CD4-positive, alpha-beta memory T cell (primary cell): ENCODE measurements at regions of chr6 and their contacts with region 1.

Region 1: GRCh38 chr6:52995913-52996645 is 995 bp upstream of the GSTA4 start:
- DNase-seq: peak in 4 of 5 donors; percentile 36 to 42 (median 39)
- H3K4me3 ChIP-seq: peak overlapping the region; percentile 4 to 59
- H3K4me3 Mint-ChIP-seq: peak overlapping the region; percentile 92 to 99 (median 94)
- H3K27ac ChIP-seq: no peak overlapping the region
- H3K27ac Mint-ChIP-seq: peak overlapping the region; percentile 95 to 100 (median 100)
- H3K4me1 ChIP-seq: peaks cover 22% of the 10 kb centered on the region
- H3K4me1 Mint-ChIP-seq: peaks cover 9 to 29% (median 20%) of the 10 kb centered on the region in 4 donors
- H3K27me3 ChIP-seq: no peaks in the 10 kb centered on the region
- H3K27me3 Mint-ChIP-seq: peaks cover 4 to 8% of the 10 kb centered on the region in 2 donors

Region 2: DNA sequence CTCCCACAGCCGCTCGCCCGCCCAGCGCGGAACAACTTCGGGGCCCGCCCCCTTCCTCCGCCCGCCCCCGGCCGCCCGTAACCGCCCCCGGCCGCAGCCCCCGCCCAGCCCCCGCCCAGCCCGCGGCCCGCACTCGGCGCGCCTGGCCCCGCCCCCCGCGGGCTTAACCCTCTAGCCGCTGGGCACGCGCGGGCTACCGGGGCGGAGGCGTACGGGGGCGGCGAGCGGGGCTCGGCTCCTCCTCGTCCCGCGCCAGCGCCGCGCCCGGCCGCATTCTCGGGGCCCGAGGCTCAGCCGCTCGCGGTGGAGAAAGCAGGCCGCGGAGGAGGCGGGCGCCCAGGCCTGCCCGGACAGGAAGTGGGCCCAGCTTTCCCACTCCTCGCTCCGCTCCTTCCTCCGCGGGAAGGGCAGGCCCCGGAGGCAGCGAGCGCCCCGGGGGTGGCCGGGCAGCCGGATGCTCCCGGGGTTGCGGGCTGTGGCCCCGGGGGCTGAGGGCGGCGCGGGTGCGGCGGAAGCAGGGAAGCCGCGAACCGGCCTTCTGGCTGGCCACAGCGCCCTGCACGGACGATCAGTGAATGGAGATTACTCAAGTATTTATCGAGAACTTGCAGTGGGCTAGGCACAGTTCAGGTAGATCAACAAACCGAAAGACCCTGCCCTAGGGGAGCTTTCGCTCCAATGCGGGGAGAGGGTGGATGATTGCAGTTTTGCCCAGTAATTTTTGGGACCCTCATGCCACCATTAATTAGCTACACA is 418.9 kb before region 1 on chr6 and contains the start of gene TRAM2:
- CTCF ChIA-PET with region 1: no interaction called
- POLR2A ChIA-PET with region 1: no interaction called
- intact Hi-C with region 1: loop called (anchors 10 kb)
- DNase-seq: peak; percentile 73 to 83 (median 79)
- H3K4me3 ChIP-seq: peak within 1 kb of the TSS; percentile 19 to 81
- H3K4me3 Mint-ChIP-seq: peak within 1 kb of the TSS; percentile 80 to 95 (median 88)
- H3K27ac ChIP-seq: peak within 1 kb of the TSS; percentile 65
- H3K27ac Mint-ChIP-seq: peak within 1 kb of the TSS; percentile 88 to 95 (median 91)
- H3K4me1 ChIP-seq: peaks cover 46% of the 10 kb centered on the region
- H3K4me1 Mint-ChIP-seq: peaks cover 32 to 60% (median 38%) of the 10 kb centered on the region in 4 donors
- H3K27me3 ChIP-seq: no peaks in the 10 kb centered on the region
- H3K27me3 Mint-ChIP-seq: no peaks in the 10 kb centered on the region
- total RNA-seq, gene TRAM2: 10.7 to 11.3 TPM

Region 3: GRCh38 chr6:52881996-52882841 is 113.9 kb before region 1 on chr6:
- CTCF ChIA-PET with region 1: interaction called, 3 read pairs
- POLR2A ChIA-PET with region 1: no interaction called
- intact Hi-C with region 1: loop called (anchors 1 kb)
- DNase-seq: peak; percentile 64 to 70 (median 66)
- H3K4me3 ChIP-seq: peak overlapping the region; percentile 37 to 53
- H3K4me3 Mint-ChIP-seq: peak overlapping the region; percentile 82 to 94 (median 86)
- H3K27ac ChIP-seq: no peak overlapping the region
- H3K27ac Mint-ChIP-seq: peak overlapping the region in 4 of 7 donors; percentile 48 to 88 (median 61)
- H3K4me1 ChIP-seq: no peaks in the 10 kb centered on the region
- H3K4me1 Mint-ChIP-seq: peaks cover 0 to 6% (median 5%) of the 10 kb centered on the region in 4 donors
- H3K27me3 ChIP-seq: no peaks in the 10 kb centered on the region
- H3K27me3 Mint-ChIP-seq: no peaks in the 10 kb centered on the region

Region 4: DNA sequence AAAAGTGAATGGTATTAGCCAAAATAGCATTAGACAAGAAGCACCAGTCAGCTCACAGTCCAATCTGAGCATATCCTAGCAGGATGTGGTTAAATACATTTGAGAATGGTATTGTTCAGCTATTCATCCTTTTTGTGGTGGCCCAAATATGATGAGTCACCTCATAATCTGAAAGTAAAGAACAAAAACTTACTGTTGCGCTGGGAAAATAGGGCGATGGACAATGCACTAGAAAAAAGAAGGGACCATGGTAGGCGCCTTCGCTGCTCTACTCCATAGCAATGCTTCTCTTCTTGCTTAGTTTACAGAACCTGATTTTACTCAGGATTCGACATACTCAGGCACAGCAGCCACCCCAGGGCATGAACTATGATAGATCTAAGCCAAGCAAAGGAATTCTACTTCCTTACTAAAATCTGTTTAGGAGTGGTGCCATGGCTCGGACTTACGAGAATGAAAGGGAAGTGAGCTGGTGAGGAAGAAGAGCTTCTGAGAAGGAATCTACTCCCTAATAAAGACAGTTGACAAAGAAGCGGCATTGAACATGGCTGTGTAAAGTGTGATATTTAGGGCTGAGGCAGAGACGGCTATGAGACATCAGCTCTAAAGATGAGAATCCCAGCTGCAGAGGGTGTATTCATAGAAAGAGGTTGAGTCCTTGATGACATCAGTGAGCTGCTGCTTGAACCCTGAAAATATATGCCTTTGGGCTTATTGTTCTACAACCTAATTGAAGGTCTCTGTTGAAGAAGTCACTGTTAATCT is 52.5 kb after region 1 on chr6:
- CTCF ChIA-PET with region 1: interaction called, 6 read pairs
- POLR2A ChIA-PET with region 1: interaction called, 3 read pairs
- intact Hi-C with region 1: loop called (anchors 5 kb)
- DNase-seq: peak in 4 of 5 donors; percentile 29 to 57 (median 48)
- H3K4me3 ChIP-seq: no peak overlapping the region
- H3K4me3 Mint-ChIP-seq: peak overlapping the region; percentile 49 to 80 (median 68)
- H3K27ac ChIP-seq: no peak overlapping the region
- H3K27ac Mint-ChIP-seq: peak overlapping the region in 5 of 7 donors; percentile 10 to 50 (median 36)
- H3K4me1 ChIP-seq: peaks cover 17% of the 10 kb centered on the region
- H3K4me1 Mint-ChIP-seq: peaks cover 24 to 35% (median 30%) of the 10 kb centered on the region in 4 donors
- H3K27me3 ChIP-seq: no peaks in the 10 kb centered on the region
- H3K27me3 Mint-ChIP-seq: no peaks in the 10 kb centered on the region

Region 5: GRCh38 chr6:53236241-53236640 is 240.2 kb after region 1 on chr6:
- CTCF ChIA-PET with region 1: no interaction called
- POLR2A ChIA-PET with region 1: no interaction called
- intact Hi-C with region 1: no loop called
- DNase-seq: no peak
- H3K4me3 ChIP-seq: peak overlapping the region; percentile 0 to 8
- H3K4me3 Mint-ChIP-seq: peak overlapping the region; percentile 67 to 88 (median 80)
- H3K27ac ChIP-seq: no peak overlapping the region
- H3K27ac Mint-ChIP-seq: peak overlapping the region; percentile 38 to 90 (median 81)
- H3K4me1 ChIP-seq: peaks cover 43% of the 10 kb centered on the region
- H3K4me1 Mint-ChIP-seq: peaks cover 34 to 48% (median 43%) of the 10 kb centered on the region in 4 donors
- H3K27me3 ChIP-seq: no peaks in the 10 kb centered on the region
- H3K27me3 Mint-ChIP-seq: no peaks in the 10 kb centered on the region

Region 6: DNA sequence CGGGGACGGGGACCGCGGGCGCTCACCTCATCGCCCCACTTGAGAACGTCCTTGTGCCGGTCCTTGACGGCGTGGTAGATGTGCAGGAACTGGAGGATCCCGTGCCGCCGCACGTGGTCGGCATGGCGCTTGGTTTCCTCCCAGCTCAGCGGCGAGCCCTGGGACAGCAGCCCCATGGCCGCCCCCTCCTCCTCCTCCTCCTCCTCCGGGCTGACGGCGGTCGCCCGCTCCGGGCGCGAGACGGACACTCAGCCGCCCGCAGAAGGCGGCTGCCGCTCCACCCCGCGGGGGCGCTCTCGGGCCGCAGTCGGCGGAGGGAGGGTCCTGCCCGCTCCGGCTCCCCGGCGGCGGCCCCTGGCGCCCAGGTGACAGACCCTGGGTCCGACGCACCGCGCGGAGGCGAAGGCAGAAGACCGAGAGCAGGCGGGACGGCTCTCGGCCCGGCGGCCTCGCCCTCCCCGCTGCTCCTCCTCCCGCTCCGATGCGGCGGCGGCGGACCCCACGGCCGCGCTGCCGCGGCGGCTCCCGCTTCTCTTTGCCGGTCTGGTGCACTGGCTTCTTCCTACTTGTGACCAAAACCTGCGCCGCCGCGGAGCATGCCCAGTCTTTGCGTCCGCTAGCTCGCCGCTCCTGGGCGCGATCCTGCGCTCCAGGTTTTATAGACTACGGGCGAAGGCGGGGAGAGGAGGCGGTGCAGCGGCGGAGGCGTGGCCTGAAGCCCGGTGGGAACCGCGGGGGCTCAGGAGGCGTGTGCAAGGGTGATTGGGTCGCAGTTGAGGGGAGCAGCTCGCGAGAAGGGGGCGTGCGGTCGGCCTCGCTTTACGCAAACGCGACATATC is 548.6 kb after region 1 on chr6 and contains the start of gene GCLC:
- CTCF ChIA-PET with region 1: no interaction called
- POLR2A ChIA-PET with region 1: no interaction called
- intact Hi-C with region 1: loop called (anchors 1 kb)
- DNase-seq: peak; percentile 82 to 85 (median 84)
- H3K4me3 ChIP-seq: peak within 1 kb of the TSS; percentile 61 to 63
- H3K4me3 Mint-ChIP-seq: peak within 1 kb of the TSS; percentile 95 to 99 (median 98)
- H3K27ac ChIP-seq: peak within 1 kb of the TSS; percentile 59
- H3K27ac Mint-ChIP-seq: peak within 1 kb of the TSS; percentile 79 to 96 (median 94)
- H3K4me1 ChIP-seq: peaks cover 51% of the 10 kb centered on the region
- H3K4me1 Mint-ChIP-seq: peaks cover 47 to 73% (median 59%) of the 10 kb centered on the region in 4 donors
- H3K27me3 ChIP-seq: no peaks in the 10 kb centered on the region
- H3K27me3 Mint-ChIP-seq: no peaks in the 10 kb centered on the region
- total RNA-seq, gene GCLC: 39.6 to 40.9 TPM

Region 7: DNA sequence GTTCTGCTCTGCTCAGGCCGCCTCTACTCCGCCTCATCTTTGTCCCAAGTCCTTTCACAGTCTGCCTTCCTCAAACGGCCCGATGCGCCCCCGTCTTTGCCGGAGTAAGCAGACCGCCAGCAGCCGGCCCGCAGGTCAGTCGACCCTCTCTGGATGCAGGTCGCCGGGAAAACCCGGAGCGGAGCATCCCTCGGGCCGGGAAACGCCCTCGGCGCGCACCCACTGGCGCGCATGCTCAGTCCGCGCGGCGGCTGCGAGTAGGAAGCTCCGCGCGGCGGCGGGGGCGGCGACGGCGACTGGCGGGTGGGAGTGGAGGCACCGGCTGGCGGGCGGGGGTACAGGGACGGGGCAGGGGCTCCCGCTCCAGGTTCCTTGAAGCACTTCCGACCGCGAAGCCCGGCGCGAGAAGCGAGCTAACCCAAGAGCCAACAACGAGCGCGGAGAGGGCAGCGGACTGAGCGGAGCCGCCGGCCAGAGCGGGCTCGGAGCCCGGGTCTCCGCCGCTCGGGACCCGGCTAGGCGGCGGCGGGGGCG is 798.7 kb after region 1 on chr6 and contains the start of gene LRRC1:
- CTCF ChIA-PET with region 1: no interaction called
- POLR2A ChIA-PET with region 1: interaction called, 4 read pairs
- intact Hi-C with region 1: loop called (anchors 5 kb)
- DNase-seq: peak; percentile 79 to 84 (median 84)
- H3K4me3 ChIP-seq: peak within 1 kb of the TSS; percentile 74 to 77
- H3K4me3 Mint-ChIP-seq: peak within 1 kb of the TSS; percentile 94 to 98 (median 97)
- H3K27ac ChIP-seq: peak within 1 kb of the TSS; percentile 41
- H3K27ac Mint-ChIP-seq: peak within 1 kb of the TSS; percentile 81 to 97 (median 91)
- H3K4me1 ChIP-seq: peaks cover 21% of the 10 kb centered on the region
- H3K4me1 Mint-ChIP-seq: peaks cover 14 to 36% (median 28%) of the 10 kb centered on the region in 4 donors
- H3K27me3 ChIP-seq: no peaks in the 10 kb centered on the region
- H3K27me3 Mint-ChIP-seq: peaks cover 2 to 6% of the 10 kb centered on the region in 2 donors
- total RNA-seq, gene LRRC1: 4.6 to 5.2 TPM